ENCODE measurements at regions of chr2 and their contacts with region 1.

Region 1: GRCh38 chr2:183124222-183124956 is at the start of gene NUP35:
- DNase-seq: peak; percentile 86 to 97 (median 91)
- H3K4me3 ChIP-seq: peak within 1 kb of the TSS; percentile 63 to 84 (median 82)
- H3K27ac ChIP-seq: peak within 1 kb of the TSS; percentile 53 to 92 (median 84)
- H3K4me1 ChIP-seq: peaks cover 6 to 23% of the 10 kb centered on the region in 2 donors
- H3K27me3 ChIP-seq: no peaks in the 10 kb centered on the region
- CTCF ChIP-seq: no peak
- POLR2A ChIP-seq: peak in 1 of 2 donors; percentile 44
- total RNA-seq, gene NUP35: 6.9 to 25.3 (median 16.4) TPM

Region 2: GRCh38 chr2:183078465-183079138 is 45.8 kb before region 1 on chr2 and contains the start of gene DUSP19:
- intact Hi-C with region 1: loop called in 1 of 2 experiments (anchors 10 kb)
- DNase-seq: peak; percentile 85 to 99 (median 93)
- H3K4me3 ChIP-seq: peak within 1 kb of the TSS; percentile 10 to 76 (median 44)
- H3K27ac ChIP-seq: peak within 1 kb of the TSS; percentile 5 to 84 (median 64)
- H3K4me1 ChIP-seq: peaks cover 4 to 6% of the 10 kb centered on the region in 2 donors
- H3K27me3 ChIP-seq: no peaks in the 10 kb centered on the region
- CTCF ChIP-seq: no peak
- POLR2A ChIP-seq: peak; percentile 67 to 89
- total RNA-seq, gene DUSP19: 2.4 to 10.0 (median 4.8) TPM

Measured in adrenal gland (tissue), 19 donors.